ENCODE measurements at regions of chr6 and their contacts with region 1.

Region 1: GRCh38 chr6:139881728-139882211 is 507.3 kb upstream of the CITED2 start:
- DNase-seq: no peak
- ATAC-seq: peak; percentile 92
- H3K4me3 ChIP-seq: no peak overlapping the region
- H3K27ac ChIP-seq: no peak overlapping the region
- H3K4me1 ChIP-seq: peaks cover 12% of the 10 kb centered on the region
- H3K27me3 ChIP-seq: no peaks in the 10 kb centered on the region
- CTCF ChIP-seq: peak; percentile 46 to 56 (median 55)
- EP300 ChIP-seq: no peak
- POLR2A ChIP-seq: no peak
- RAD21 ChIP-seq: peak; percentile 52

Region 2: GRCh38 chr6:139738801-139739490 is 142.8 kb before region 1 on chr6:
- CTCF ChIA-PET with region 1: no interaction called
- POLR2A ChIA-PET with region 1: no interaction called
- RAD21 ChIA-PET with region 1: no interaction called
- SMC1A ChIA-PET with region 1: no interaction called
- in situ Hi-C with region 1: no loop called
- intact Hi-C with region 1: no loop called
- DNase-seq: no peak
- ATAC-seq: no peak
- H3K4me3 ChIP-seq: no peak overlapping the region
- H3K27ac ChIP-seq: no peak overlapping the region
- H3K4me1 ChIP-seq: 0 out of 2 replicates have a peak, but pooled peaks cover 4% of the 10 kb centered on the region
- H3K27me3 ChIP-seq: no peaks in the 10 kb centered on the region
- CTCF ChIP-seq: no peak
- EP300 ChIP-seq: no peak
- POLR2A ChIP-seq: no peak
- RAD21 ChIP-seq: no peak

Region 3: GRCh38 chr6:139903411-139904157 is 21.8 kb after region 1 on chr6:
- CTCF ChIA-PET with region 1: interaction called, 19 read pairs
- POLR2A ChIA-PET with region 1: interaction called, 3 read pairs
- RAD21 ChIA-PET with region 1: interaction called, 12 read pairs
- SMC1A ChIA-PET with region 1: interaction called, 21 read pairs
- in situ Hi-C with region 1: no loop called
- intact Hi-C with region 1: no loop called
- DNase-seq: peak; percentile 75
- ATAC-seq: peak; percentile 97
- H3K4me3 ChIP-seq: no peak overlapping the region
- H3K27ac ChIP-seq: peak overlapping the region; percentile 76
- H3K4me1 ChIP-seq: peaks cover 15% of the 10 kb centered on the region; the same call in 1 of the 2 replicates
- H3K27me3 ChIP-seq: no peaks in the 10 kb centered on the region
- CTCF ChIP-seq: no peak
- EP300 ChIP-seq: peak in 1 of 2 experiments; percentile 54; a peak in 2 of 4 replicates
- POLR2A ChIP-seq: no peak
- RAD21 ChIP-seq: peak; percentile 16; the same call in 1 of the 2 replicates

Region 4: GRCh38 chr6:139996253-139996834 is 114.6 kb after region 1 on chr6:
- CTCF ChIA-PET with region 1: interaction called, 29 read pairs
- POLR2A ChIA-PET with region 1: no interaction called
- RAD21 ChIA-PET with region 1: interaction called, 3 read pairs
- SMC1A ChIA-PET with region 1: interaction called, 19 read pairs
- in situ Hi-C with region 1: no loop called
- intact Hi-C with region 1: loop called (anchors 5 kb)
- DNase-seq: peak; percentile 35
- ATAC-seq: peak; percentile 87
- H3K4me3 ChIP-seq: no peak overlapping the region
- H3K27ac ChIP-seq: no peak overlapping the region
- H3K4me1 ChIP-seq: no peaks in the 10 kb centered on the region
- H3K27me3 ChIP-seq: no peaks in the 10 kb centered on the region
- CTCF ChIP-seq: peak; percentile 9 to 32 (median 30); a peak in 4 of 6 replicates
- EP300 ChIP-seq: no peak
- POLR2A ChIP-seq: no peak
- RAD21 ChIP-seq: peak; percentile 58; the same call in 1 of the 2 replicates

Region 5: DNA sequence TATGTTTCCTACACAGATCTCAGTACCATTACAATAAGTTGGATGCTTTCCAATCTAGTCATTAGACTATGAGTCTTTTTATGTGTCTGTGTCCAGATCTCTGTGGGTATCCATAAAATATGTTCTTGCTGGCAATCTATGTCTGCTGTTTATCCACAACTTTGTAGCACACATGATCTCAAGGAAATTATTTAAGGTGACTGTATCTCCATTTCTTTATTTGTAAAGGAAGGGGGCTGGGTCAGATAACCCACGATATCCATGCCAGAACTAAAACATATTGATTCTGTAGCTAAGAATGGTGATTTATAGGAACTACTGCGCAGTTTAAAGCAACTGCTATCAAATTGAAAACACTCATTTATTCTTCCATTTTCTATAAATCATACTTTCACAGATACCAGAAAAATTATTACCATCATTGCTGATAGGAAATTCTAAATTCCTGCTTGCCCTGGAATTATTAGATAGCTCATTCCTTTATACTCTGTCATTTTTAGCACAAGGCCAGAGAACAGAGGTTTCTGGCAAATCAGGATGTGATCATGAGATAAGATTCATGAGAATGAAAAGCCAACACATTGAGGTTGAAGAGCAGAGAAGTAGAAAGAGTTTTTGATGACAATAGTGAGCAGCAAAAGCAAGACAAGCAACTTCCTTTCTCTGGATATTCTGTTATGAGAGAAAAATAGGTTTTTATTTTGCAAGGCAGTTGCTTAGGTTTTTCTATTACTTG is 344.1 kb after region 1 on chr6:
- CTCF ChIA-PET with region 1: no interaction called
- POLR2A ChIA-PET with region 1: no interaction called
- RAD21 ChIA-PET with region 1: no interaction called
- SMC1A ChIA-PET with region 1: no interaction called
- in situ Hi-C with region 1: no loop called
- intact Hi-C with region 1: no loop called
- DNase-seq: no peak
- ATAC-seq: no peak
- H3K4me3 ChIP-seq: no peak overlapping the region
- H3K27ac ChIP-seq: no peak overlapping the region
- H3K4me1 ChIP-seq: no peaks in the 10 kb centered on the region
- H3K27me3 ChIP-seq: no peaks in the 10 kb centered on the region
- CTCF ChIP-seq: no peak
- EP300 ChIP-seq: no peak
- POLR2A ChIP-seq: no peak
- RAD21 ChIP-seq: no peak

Region 6: DNA sequence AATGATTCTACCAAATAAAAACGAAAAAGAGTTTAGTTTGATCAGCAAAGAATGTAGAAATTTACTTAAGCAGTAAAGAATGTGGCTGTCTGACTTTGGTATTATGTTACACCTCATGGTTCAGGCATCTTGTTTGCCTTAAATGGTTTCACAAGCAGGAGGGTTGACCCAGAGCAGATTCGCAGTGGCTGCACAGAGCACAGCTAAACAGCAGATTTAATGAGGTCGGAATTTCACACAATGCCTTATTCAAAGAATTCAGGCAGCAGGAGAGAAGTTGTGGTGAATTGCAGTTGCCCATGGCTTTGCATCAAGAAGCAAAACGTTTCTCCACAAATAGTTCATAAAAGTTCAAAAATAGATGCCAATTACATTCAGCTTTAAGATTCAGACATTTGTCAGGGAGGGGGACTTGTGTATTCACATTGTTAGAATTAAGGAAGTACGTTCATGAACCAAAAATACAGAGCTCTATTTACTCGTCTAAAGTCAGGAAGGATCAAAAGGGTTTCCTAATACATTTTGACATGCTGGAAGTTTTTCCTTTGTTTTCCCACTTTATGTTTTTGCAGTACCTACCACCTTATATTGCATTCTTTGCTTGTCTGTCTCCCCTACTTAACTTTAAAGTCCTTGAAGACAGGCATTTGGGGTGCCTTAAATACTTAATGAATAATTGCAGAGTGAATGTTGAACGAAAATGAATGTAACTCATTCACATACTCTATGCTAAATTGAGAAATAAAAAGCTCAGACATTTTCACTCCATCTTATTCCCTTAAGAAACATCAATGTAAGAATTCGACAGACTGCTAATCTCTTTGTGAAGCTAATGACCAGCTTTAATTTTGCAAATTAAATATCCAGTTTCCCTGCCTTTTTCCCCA is 656.3 kb after region 1 on chr6:
- CTCF ChIA-PET with region 1: interaction called, 3 read pairs
- POLR2A ChIA-PET with region 1: interaction called, 4 read pairs
- RAD21 ChIA-PET with region 1: no interaction called
- SMC1A ChIA-PET with region 1: no interaction called
- in situ Hi-C with region 1: no loop called
- intact Hi-C with region 1: loop called (anchors 10 kb)
- DNase-seq: no peak
- ATAC-seq: peak; percentile 63
- H3K4me3 ChIP-seq: no peak overlapping the region
- H3K27ac ChIP-seq: no peak overlapping the region
- H3K4me1 ChIP-seq: no peaks in the 10 kb centered on the region
- H3K27me3 ChIP-seq: no peaks in the 10 kb centered on the region
- CTCF ChIP-seq: no peak
- EP300 ChIP-seq: no peak; a peak in 1 of 4 replicates
- POLR2A ChIP-seq: no peak
- RAD21 ChIP-seq: no peak

Measured in GM12878 (cell line).